HCT116 (cell line): ENCODE measurements at regions of chr15 and their contacts with region 1.

Region 1: GRCh38 chr15:89358755-89359439 is 24.3 kb upstream of the POLG start:
- DNase-seq: peak; percentile 59
- ATAC-seq: peak; percentile 88
- H3K4me3 ChIP-seq: peak overlapping the region; percentile 40 to 55
- H3K27ac ChIP-seq: peak overlapping the region; percentile 28; the same call in 1 of the 2 replicates
- H3K4me1 ChIP-seq: peaks cover 2 to 16% of the 10 kb centered on the region in 2 experiments; a peak in 1 of 4 replicates
- H3K27me3 ChIP-seq: peaks cover 10% of the 10 kb centered on the region; the same call in 1 of the 2 replicates
- CTCF ChIP-seq: peak; percentile 83 to 99 (median 95)
- POLR2A ChIP-seq: no peak
- RAD21 ChIP-seq: peak; percentile 97

Region 2: GRCh38 chr15:89206908-89207331 is 152.0 kb before region 1 on chr15:
- CTCF ChIA-PET with region 1: interaction called, 13 read pairs
- POLR2A ChIA-PET with region 1: no interaction called
- RAD21 ChIA-PET with region 1: no interaction called
- intact Hi-C with region 1: no loop called
- DNase-seq: peak; percentile 47
- ATAC-seq: peak; percentile 99
- H3K4me3 ChIP-seq: peak overlapping the region; percentile 28 to 50
- H3K27ac ChIP-seq: no peak overlapping the region
- H3K4me1 ChIP-seq: peaks cover 0 to 7% of the 10 kb centered on the region in 2 experiments; a peak in 2 of 4 replicates
- H3K27me3 ChIP-seq: no peaks in the 10 kb centered on the region
- CTCF ChIP-seq: peak; percentile 89 to 99 (median 96)
- POLR2A ChIP-seq: no peak
- RAD21 ChIP-seq: peak; percentile 91

Region 3: GRCh38 chr15:89389841-89390603 is 31.1 kb after region 1 on chr15:
- CTCF ChIA-PET with region 1: interaction called, 10 read pairs
- POLR2A ChIA-PET with region 1: no interaction called
- RAD21 ChIA-PET with region 1: no interaction called
- intact Hi-C with region 1: no loop called
- DNase-seq: no peak
- ATAC-seq: no peak; the same call in 1 of the 2 replicates
- H3K4me3 ChIP-seq: no peak overlapping the region
- H3K27ac ChIP-seq: no peak overlapping the region
- H3K4me1 ChIP-seq: no peaks in the 10 kb centered on the region
- H3K27me3 ChIP-seq: no peaks in the 10 kb centered on the region
- CTCF ChIP-seq: no peak
- POLR2A ChIP-seq: no peak
- RAD21 ChIP-seq: no peak

Region 4: DNA sequence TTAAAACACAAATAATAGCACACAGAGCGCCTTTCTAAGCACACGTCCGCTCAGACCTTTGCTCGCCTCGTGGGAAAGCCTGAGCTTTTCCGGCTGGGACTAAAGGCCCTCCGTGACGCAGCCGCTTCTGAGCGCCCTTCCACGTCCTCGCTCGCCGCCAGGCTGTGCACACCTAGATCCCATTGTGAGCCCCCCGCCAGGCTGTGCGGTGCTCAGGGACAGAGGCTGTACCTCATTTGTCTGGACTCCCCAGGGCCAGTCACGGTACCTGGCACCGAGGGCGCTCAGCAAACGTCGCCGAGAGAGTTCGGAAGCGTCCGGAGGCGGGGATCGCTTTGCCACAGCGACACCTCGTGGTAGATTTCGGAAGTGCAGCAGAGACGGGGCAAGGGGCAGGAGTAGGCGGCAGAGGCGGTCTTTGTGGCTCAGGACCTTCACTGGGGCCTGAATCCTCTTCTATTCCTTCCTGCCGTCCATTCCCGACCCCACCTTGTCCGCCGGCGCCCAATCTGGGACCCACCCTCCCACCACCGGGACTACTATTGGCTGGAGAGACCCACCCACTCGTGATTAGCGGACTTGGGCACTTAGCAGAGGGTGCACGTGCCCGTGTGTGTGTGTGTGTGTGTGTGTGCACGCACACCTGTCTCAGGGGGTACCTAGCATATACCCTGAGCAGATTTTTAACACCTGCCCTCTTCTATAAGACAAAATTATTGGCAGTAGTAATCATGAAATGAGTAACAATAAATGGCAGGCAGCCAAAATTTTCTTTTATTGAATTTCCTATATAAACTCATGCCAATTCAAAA is 71.8 kb after region 1 on chr15:
- CTCF ChIA-PET with region 1: interaction called, 46 read pairs
- POLR2A ChIA-PET with region 1: interaction called, 3 read pairs
- RAD21 ChIA-PET with region 1: interaction called in 1 of 2 experiments, 6 read pairs
- intact Hi-C with region 1: loop called (anchors 1 kb)
- DNase-seq: peak; percentile 57
- ATAC-seq: peak; percentile 97
- H3K4me3 ChIP-seq: peak overlapping the region; percentile 39 to 52
- H3K27ac ChIP-seq: no peak overlapping the region
- H3K4me1 ChIP-seq: peaks cover 4 to 13% of the 10 kb centered on the region in 2 experiments; a peak in 2 of 4 replicates
- H3K27me3 ChIP-seq: no peaks in the 10 kb centered on the region
- CTCF ChIP-seq: peak; percentile 89 to 95 (median 93)
- POLR2A ChIP-seq: no peak
- RAD21 ChIP-seq: peak; percentile 81

Region 5: DNA sequence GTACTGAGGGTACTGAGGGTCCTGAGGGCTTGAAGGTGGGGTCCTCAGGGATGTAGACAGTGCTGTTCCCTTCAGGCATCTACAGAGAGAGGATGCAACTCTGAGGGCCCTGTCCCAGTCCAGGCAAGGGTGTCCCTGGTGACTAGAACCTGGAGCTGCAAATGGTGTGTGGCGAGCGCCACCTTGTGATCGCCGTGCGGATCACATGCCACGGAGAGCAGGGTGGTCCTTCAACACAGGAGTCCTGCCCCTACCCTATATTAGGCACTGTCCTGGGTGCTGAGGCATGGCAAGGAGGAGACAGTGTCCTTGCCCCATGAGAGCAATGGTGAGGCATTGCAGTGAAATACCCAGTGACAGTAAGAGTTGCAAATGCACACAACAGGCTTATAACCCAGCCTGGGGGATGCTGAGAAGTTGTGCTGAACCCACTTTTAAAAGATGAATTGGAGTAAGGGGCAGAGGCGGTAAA is 113.9 kb after region 1 on chr15:
- CTCF ChIA-PET with region 1: interaction called, 185 read pairs
- POLR2A ChIA-PET with region 1: no interaction called
- RAD21 ChIA-PET with region 1: interaction called, 11 to 14 read pairs
- intact Hi-C with region 1: loop called (anchors 1 kb)
- DNase-seq: peak; percentile 48
- ATAC-seq: peak; percentile 99
- H3K4me3 ChIP-seq: no peak overlapping the region
- H3K27ac ChIP-seq: no peak overlapping the region
- H3K4me1 ChIP-seq: no peaks in the 10 kb centered on the region; a peak in 1 of 4 replicates
- H3K27me3 ChIP-seq: peaks cover 8% of the 10 kb centered on the region; the same call in 1 of the 2 replicates
- CTCF ChIP-seq: peak; percentile 86 to 96 (median 93)
- POLR2A ChIP-seq: no peak
- RAD21 ChIP-seq: peak; percentile 94

Region 6: GRCh38 chr15:89556413-89557262 is 197.7 kb after region 1 on chr15:
- CTCF ChIA-PET with region 1: no interaction called
- POLR2A ChIA-PET with region 1: no interaction called
- RAD21 ChIA-PET with region 1: no interaction called
- intact Hi-C with region 1: loop called (anchors 5 kb)
- DNase-seq: peak; percentile 70
- ATAC-seq: peak; percentile 83
- H3K4me3 ChIP-seq: no peak overlapping the region
- H3K27ac ChIP-seq: no peak overlapping the region
- H3K4me1 ChIP-seq: peaks cover 0 to 5% of the 10 kb centered on the region in 2 experiments; a peak in 2 of 4 replicates
- H3K27me3 ChIP-seq: no peaks in the 10 kb centered on the region
- CTCF ChIP-seq: peak; percentile 72 to 87 (median 82); a peak in 5 of 6 replicates
- POLR2A ChIP-seq: no peak
- RAD21 ChIP-seq: peak; percentile 76